Activated naive CD4-positive, alpha-beta T cell treated with anti-CD3 and anti-CD28 coated beads for 36 hours (primary cell): ENCODE measurements at regions of chr11 and their contacts with region 1.

Region 1: GRCh38 chr11:65261591-65262380 is at the start of gene POLA2:
- DNase-seq: peak; percentile 98
- H3K4me3 Mint-ChIP-seq: peak within 1 kb of the TSS; percentile 93
- H3K27ac Mint-ChIP-seq: peak within 1 kb of the TSS; percentile 94
- H3K4me1 Mint-ChIP-seq: peaks cover 44% of the 10 kb centered on the region
- H3K27me3 Mint-ChIP-seq: no peaks in the 10 kb centered on the region
- total RNA-seq, gene POLA2: 65.1 to 67.0 TPM

Region 2: GRCh38 chr11:64810271-64810890 is 451.4 kb before region 1 on chr11 and contains the start of gene MEN1:
- CTCF ChIA-PET with region 1: no interaction called
- intact Hi-C with region 1: no loop called
- DNase-seq: peak; percentile 93
- H3K4me3 Mint-ChIP-seq: peak within 1 kb of the TSS; percentile 97
- H3K27ac Mint-ChIP-seq: peak within 1 kb of the TSS; percentile 84
- H3K4me1 Mint-ChIP-seq: peaks cover 20% of the 10 kb centered on the region
- H3K27me3 Mint-ChIP-seq: no peaks in the 10 kb centered on the region
- total RNA-seq, gene MEN1: 23.9 TPM

Region 3: DNA sequence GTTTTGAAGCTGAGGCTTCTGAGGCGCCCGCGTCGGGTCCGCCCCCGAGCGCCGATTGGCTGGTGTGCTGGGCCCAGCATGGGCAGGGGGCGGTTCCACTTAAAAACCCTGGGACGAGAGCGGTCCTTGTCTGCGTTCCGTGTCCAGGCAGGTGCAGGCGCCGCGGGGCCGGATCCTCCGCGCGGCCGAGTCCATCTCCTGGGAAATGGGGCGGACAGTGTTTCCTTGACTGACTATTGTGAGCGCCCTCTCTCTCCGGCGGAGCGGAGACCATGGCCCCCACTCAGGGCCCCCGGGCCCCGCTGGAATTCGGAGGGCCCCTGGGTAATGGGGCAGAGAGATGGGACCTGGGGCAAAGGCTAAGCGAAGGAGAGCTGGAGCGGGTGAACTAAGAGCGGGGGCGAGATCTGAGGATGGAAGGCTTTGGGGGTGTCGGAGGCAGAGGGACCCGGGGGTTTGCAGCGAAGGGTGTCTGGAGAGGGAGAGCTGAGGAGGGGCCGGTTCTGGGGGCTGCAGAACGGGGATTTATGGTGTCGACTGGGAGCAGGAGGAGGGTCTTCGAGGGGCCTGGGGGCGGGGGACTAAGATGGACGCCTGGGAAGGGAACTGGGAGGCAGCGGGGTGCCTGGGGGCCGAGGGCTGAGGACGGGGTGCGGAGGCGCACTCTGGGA is 149.9 kb before region 1 on chr11 and contains the start of gene TM7SF2:
- CTCF ChIA-PET with region 1: no interaction called
- intact Hi-C with region 1: loop called (anchors 5 kb)
- DNase-seq: peak; percentile 96
- H3K4me3 Mint-ChIP-seq: peak within 1 kb of the TSS; percentile 80
- H3K27ac Mint-ChIP-seq: peak within 1 kb of the TSS; percentile 72
- H3K4me1 Mint-ChIP-seq: peaks cover 51% of the 10 kb centered on the region
- H3K27me3 Mint-ChIP-seq: no peaks in the 10 kb centered on the region
- total RNA-seq, gene TM7SF2: 10.9 to 11.9 TPM

Region 4: DNA sequence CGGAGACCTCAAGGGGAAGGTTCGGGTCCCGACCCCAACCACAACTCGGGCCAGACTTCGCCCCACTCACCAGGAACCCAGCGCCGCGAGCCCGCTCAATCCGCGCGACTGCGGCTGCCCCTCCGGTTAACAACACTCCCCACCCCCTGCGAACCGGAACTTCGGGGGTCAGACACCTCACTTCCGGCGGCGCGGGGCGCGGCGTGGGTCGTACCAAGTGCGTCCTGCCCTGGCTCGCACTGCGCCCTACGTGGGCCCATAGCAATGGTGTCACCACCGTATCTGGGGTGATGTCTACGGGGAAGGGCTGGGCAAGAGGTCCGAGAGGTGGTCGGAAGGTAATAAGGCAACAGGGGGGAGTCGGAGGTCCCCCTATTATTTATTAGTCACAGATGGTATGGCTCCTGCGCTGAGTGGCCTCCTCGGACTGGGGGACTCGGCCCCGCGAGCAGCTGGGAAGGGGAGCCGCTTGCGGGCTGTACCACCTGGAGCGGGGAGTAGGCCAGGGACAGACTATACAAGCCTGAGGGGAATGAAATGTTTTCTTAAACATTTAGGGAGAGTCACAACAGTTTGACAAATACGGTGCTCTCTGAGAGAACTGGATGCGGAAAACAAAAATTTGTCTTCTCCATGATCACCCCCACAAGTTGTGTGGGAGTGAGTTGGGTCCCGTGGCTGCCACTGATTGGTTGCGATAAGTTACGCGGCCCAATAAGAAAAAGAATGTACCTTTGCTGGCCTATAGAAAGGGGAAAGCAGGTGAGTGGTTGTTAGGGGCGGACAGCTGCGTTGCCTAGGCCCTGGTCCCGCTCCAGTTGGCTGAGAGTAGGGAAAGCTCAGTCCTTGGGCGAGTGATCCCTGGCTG is 127.2 kb before region 1 on chr11 and contains the start of gene SYVN1:
- CTCF ChIA-PET with region 1: no interaction called
- intact Hi-C with region 1: loop called (anchors 5 kb)
- DNase-seq: peak; percentile 92
- H3K4me3 Mint-ChIP-seq: peak within 1 kb of the TSS; percentile 99
- H3K27ac Mint-ChIP-seq: peak within 1 kb of the TSS; percentile 100
- H3K4me1 Mint-ChIP-seq: peaks cover 29% of the 10 kb centered on the region
- H3K27me3 Mint-ChIP-seq: no peaks in the 10 kb centered on the region
- total RNA-seq, gene SYVN1: 19.0 to 19.2 TPM

Region 5: GRCh38 chr11:65274735-65275682 is 13.2 kb after region 1 on chr11:
- CTCF ChIA-PET with region 1: interaction called, 5 read pairs
- intact Hi-C with region 1: loop called (anchors 2 kb)
- DNase-seq: peak; percentile 53
- H3K4me3 Mint-ChIP-seq: no peak overlapping the region
- H3K27ac Mint-ChIP-seq: no peak overlapping the region
- H3K4me1 Mint-ChIP-seq: peaks cover 15% of the 10 kb centered on the region
- H3K27me3 Mint-ChIP-seq: no peaks in the 10 kb centered on the region

Region 6: DNA sequence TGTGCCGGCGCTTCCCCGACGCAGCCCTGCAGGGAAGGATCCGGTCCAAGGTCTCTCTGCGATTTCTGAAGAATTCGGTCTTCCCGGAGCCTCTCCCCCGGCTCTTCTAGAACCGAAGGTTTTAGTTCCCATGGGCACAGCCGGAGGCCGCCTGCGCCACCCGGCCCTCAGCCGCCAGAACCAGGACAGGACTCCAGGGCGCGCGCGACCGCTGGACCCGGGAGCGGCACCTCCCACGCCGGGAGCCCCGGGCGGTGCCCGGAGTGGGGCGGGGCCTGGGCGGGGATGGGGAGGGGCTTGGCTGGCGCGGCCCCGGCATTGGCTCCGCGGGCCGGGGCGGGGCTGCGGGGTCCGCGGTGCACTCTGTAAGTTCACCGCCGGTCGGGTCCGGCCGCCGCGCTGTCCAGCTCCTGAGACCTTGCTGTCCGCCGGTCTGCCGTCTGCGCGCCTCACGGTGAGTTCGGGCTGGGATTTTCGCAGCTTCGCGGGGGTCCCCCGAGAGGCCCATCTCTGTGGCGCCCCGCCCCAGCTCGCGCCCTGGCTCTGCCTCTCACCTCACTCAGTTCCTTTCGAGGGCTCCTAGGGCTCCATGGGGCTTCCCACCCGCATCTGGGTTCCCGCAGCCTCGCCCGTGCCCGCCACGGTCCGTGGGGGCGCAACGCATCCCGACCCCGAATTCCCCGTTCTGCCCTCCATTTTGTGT is 52.9 kb after region 1 on chr11 and contains the start of gene CDC42EP2:
- CTCF ChIA-PET with region 1: interaction called, 12 read pairs
- intact Hi-C with region 1: no loop called
- DNase-seq: peak; percentile 72
- H3K4me3 Mint-ChIP-seq: peak within 1 kb of the TSS; percentile 74
- H3K27ac Mint-ChIP-seq: no peak within 1 kb of the TSS
- H3K4me1 Mint-ChIP-seq: peaks cover 5% of the 10 kb centered on the region
- H3K27me3 Mint-ChIP-seq: peaks cover 8% of the 10 kb centered on the region
- total RNA-seq, gene CDC42EP2: 0.57 to 1.5 TPM

Region 7: DNA sequence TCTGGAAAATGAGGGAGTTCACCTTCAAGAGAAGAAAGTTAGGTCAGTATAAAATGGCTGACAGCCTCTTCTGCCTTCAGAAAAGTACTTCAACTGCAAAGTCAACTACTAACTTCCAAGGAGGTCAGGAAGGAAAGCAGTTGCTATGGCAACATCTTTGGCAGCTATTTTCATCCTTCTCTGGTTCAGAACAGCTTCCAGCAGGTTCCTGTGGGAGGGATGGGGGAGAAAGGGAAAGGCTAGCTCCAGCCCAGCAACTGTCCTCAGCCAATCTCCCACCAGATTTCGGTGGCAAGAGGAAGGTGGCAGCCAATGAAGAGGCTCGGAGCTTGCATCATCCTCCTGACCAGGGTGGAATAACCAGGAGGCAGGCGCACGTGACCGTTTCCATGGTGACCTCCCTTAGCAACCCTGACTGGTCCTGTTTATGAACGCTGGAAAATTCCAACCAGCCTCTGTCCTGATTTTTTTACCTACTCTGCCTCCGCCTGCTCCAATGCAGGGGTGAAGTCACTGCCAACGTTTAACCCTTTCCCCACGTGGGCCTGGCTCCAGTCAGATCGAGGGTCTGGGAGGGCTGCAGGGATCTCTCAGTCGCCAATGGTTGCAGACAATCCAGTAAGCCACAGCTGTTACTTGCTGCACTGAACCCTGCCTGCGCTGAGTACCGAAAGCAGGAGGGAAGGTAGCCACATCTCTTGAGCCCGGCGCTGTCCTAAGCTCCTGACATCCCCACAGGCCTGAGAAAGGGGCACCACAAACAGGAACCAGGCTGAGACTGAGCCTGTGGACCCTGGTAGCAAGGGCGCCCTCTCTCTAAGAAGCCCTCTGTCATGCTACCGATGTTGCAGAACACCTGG is 225.9 kb after region 1 on chr11:
- CTCF ChIA-PET with region 1: no interaction called
- intact Hi-C with region 1: no loop called
- DNase-seq: peak; percentile 83
- H3K4me3 Mint-ChIP-seq: peak overlapping the region; percentile 59
- H3K27ac Mint-ChIP-seq: peak overlapping the region; percentile 72
- H3K4me1 Mint-ChIP-seq: peaks cover 63% of the 10 kb centered on the region
- H3K27me3 Mint-ChIP-seq: no peaks in the 10 kb centered on the region